Activated T-helper 2 cell treated with anti-CD3 and anti-CD28 coated beads, Interferon-gamma antibody, Interleukin-2, Interleukin-4, amounts not matched to agents 10 μg/mL and 5 μg/mL and 100 μg/mL, durations not matched to agents 14 hours and 24 hours and 36 hours (primary cell): ENCODE measurements at regions of chr3 and their contacts with region 1.

Region 1: DNA sequence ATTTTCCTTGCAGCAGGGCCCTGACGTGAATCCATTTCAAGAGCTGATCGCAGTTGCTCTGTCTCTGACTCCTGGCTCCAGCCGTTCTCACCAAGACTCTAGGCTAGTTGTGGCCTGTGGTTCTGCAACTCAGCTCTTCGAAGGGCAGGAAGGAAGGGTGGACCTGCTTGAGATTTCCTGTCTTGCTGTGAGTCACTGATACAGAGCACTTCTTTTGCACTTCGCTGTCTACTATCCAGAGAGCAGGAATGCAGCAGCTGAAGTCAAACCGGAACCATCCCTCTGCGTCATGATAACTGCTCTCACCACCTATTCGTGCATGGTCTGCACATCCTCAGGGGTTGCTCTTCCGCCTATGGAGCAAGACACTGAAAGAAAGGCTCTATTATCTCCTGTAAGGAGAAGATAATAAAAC is 59.7 kb downstream of the RAP2B start:
- DNase-seq: peak; percentile 78
- H3K4me3 Mint-ChIP-seq: peak overlapping the region; percentile 38
- H3K27ac Mint-ChIP-seq: peak overlapping the region; percentile 85
- H3K4me1 Mint-ChIP-seq: peaks cover 46% of the 10 kb centered on the region
- H3K27me3 Mint-ChIP-seq: no peaks in the 10 kb centered on the region

Region 2: GRCh38 chr3:153138276-153139210 is 83.2 kb before region 1 on chr3:
- intact Hi-C with region 1: loop called (anchors 5 kb)
- DNase-seq: peak; percentile 34
- H3K4me3 Mint-ChIP-seq: no peak overlapping the region
- H3K27ac Mint-ChIP-seq: peak overlapping the region; percentile 72
- H3K4me1 Mint-ChIP-seq: peaks cover 17% of the 10 kb centered on the region
- H3K27me3 Mint-ChIP-seq: no peaks in the 10 kb centered on the region

Region 3: DNA sequence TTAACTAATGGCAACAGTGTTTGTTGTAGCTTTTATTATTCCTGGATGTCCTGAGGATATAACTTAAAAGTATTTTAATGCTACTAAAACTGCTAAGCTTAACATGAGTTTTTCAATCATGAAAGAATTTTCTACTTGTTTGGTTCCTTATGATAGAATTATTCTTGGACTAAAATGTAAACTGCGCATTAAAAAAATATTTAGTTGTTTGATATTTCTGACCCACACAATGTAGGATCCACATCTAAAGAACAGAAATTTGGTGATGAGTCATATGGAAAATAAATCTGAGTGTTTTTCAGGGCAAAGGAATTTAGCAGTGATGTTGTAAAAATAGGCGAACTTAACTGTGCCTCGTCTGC is 11.1 kb after region 1 on chr3:
- intact Hi-C with region 1: no loop called
- DNase-seq: no peak
- H3K4me3 Mint-ChIP-seq: no peak overlapping the region
- H3K27ac Mint-ChIP-seq: no peak overlapping the region
- H3K4me1 Mint-ChIP-seq: no peaks in the 10 kb centered on the region
- H3K27me3 Mint-ChIP-seq: no peaks in the 10 kb centered on the region

Region 4: DNA sequence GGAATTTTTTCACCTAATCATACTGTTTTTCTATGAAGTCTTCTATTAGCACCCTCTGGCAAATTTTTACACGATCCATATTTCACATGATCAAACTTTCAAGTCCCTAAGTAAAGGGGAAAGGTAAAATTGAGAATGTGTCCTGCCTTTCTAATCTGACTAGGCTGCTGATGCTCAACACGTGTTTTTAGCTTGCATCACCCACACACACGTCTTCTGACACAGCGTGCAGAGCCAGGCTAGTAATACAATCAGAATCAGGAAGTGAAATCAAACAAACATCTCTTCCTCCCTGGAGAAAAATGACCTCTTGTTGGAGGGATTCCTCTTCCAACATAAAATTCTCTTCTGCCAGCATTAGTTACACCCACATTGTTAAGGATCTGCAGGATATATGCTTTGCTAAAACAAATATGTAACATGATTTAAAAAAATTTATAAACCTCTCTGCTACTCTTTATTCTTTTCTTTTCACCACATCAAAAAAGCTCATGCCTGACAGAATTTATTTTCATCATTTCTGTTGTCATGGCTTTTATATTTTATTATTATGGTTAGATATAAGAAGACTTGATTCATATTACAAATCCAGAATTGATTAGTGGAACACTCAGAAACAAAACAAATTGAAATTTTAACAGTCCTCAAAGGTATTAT is 62.7 kb after region 1 on chr3:
- intact Hi-C with region 1: loop called (anchors 5 kb)
- DNase-seq: no peak
- H3K4me3 Mint-ChIP-seq: no peak overlapping the region
- H3K27ac Mint-ChIP-seq: no peak overlapping the region
- H3K4me1 Mint-ChIP-seq: peaks cover 28% of the 10 kb centered on the region
- H3K27me3 Mint-ChIP-seq: no peaks in the 10 kb centered on the region

Region 5: GRCh38 chr3:154120961-154121700 is 899.4 kb after region 1 on chr3 and contains the start of gene ARHGEF26:
- intact Hi-C with region 1: no loop called
- DNase-seq: peak; percentile 72
- H3K4me3 Mint-ChIP-seq: peak within 1 kb of the TSS; percentile 77
- H3K27ac Mint-ChIP-seq: no peak within 1 kb of the TSS
- H3K4me1 Mint-ChIP-seq: peaks cover 13% of the 10 kb centered on the region
- H3K27me3 Mint-ChIP-seq: peaks cover 53% of the 10 kb centered on the region
- total RNA-seq, gene ARHGEF26: 0.18 and 0.28 TPM in 2 replicates